A549 (cell line): ENCODE measurements at regions of chr11 and their contacts with region 1.

Region 1: DNA sequence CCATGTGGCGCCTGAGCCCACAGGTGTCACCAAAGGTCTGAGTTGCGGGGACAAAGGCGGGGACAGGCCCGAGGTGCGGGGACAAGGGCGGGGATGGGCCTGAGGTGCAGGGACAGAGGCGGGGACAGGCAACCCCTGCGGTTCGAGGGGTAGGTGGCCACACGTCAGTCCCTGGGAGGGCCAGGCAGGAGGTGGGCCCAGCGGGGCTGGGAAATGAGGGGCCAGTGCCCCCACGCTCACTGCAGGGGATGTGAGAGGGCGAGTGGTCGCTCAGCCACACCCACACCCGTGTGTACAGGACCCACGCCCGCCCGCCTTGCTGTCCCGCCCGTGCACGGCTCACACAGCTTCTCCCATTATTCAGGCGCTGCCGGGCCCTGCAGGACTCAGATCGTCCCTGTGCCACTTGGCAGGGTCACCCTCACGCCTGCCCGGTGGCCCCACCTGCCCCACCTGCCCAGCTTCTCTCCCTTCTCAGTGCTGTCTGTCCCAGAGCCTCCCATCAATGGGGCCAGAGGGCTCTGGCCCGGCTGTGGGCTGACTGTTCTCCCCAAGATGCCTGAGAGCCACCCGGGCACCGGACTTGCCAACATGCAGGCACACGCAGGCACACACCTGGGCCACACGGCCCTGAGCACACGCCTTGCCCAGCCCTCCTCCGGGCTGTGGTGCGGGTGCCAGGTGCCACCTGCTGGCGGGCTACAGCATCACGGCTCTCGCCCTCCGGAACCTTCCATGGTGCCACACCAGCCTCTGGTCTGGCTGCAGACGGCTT is 14.2 kb upstream of the MUC6 start:
- DNase-seq: peak; percentile 79 to 93
- ATAC-seq: peak; percentile 86 to 96
- H3K4me3 ChIP-seq: no peak overlapping the region
- H3K27ac ChIP-seq: peak overlapping the region; percentile 30 to 81; a peak in 5 of 6 replicates
- H3K4me1 ChIP-seq: peaks cover 42% of the 10 kb centered on the region
- CTCF ChIP-seq: peak; percentile 94
- EP300 ChIP-seq: no peak
- POLR2A ChIP-seq: no peak
- RAD21 ChIP-seq: peak; percentile 97 to 98

Region 2: DNA sequence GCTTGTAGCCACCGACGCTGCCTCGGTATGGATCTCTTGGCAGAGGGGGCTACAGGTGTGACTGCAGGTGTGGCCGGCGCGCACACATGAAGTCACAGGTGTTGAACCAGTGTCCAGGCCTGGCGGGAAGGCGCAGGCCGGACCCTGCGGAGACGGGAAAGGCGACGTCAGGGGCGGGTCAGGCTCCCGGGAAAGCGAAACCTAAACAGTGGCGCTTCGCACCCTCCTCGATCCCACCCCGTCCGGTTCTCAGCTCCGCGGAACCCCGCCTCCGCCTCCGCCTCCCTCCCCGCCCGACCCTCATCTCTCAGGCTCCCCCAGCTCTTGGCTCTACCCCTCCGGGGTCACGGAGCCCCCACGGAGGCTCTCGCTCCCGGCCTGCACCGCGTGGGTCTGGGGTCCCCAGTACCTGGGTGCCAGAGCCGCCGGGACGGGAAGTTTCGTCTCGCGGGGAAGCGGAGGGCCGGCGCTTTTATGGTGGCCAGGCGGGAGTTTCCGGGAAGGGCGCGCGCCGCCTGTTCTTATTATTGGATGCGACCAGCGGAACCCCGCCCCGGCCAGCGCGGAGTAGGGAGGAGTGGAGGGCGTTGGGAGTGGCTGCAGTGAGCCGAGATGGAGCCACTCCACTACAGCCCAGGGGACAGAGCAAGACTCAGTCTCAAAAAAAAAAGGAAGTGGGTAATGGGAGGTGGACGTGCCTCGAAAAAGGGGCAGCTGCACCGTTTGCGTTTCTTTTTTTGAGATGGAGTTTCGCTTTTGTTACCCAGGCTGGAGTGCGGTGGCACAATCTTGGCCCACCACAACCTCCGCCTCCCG is 435.1 kb before region 1 on chr11 and contains the start of gene IRF7:
- CTCF ChIA-PET with region 1: no interaction called
- POLR2A ChIA-PET with region 1: no interaction called
- DNase-seq: peak; percentile 90 to 92
- ATAC-seq: peak; percentile 72 to 90
- H3K4me3 ChIP-seq: peak within 1 kb of the TSS; percentile 58
- H3K27ac ChIP-seq: peak within 1 kb of the TSS; percentile 88 to 97
- H3K4me1 ChIP-seq: peaks cover 13% of the 10 kb centered on the region; the same call in 2 of the 3 replicates
- CTCF ChIP-seq: no peak
- EP300 ChIP-seq: no peak
- POLR2A ChIP-seq: peak; percentile 61
- RAD21 ChIP-seq: no peak
- polyA plus RNA-seq, gene IRF7: 2.0 TPM in 2 replicates

Region 3: GRCh38 chr11:859509-860131 is 191.1 kb before region 1 on chr11:
- CTCF ChIA-PET with region 1: interaction called, 32 read pairs
- POLR2A ChIA-PET with region 1: interaction called, 3 read pairs
- DNase-seq: peak; percentile 65 to 70
- ATAC-seq: peak; percentile 16 to 60
- H3K4me3 ChIP-seq: no peak overlapping the region
- H3K27ac ChIP-seq: peak overlapping the region in 1 of 2 experiments; percentile 71; a peak in 3 of 6 replicates
- H3K4me1 ChIP-seq: peaks cover 49% of the 10 kb centered on the region
- CTCF ChIP-seq: no peak
- EP300 ChIP-seq: no peak
- POLR2A ChIP-seq: no peak
- RAD21 ChIP-seq: no peak

Region 4: DNA sequence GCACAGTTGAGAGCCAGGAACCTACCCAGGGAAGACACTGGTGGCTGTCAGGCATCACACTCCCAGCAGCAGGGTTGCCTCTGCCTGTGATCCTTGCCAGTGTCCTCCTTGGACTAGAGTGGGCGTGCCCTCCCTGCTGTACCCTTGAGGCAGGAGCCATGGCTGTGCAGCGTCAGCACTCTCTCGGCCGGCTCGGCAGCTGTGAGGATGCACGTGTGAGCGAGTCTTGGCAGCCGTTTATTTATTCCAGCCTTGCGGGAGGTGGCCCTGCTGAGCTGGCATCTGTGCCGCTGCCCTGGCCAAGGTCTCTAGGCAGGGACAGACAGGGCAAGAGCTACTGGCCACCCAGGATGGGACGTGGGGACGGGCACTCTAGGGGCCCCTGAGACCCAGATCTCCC is 174.2 kb before region 1 on chr11:
- CTCF ChIA-PET with region 1: interaction called, 14 read pairs
- POLR2A ChIA-PET with region 1: no interaction called
- DNase-seq: no peak
- ATAC-seq: peak; percentile 2 to 9; a peak in 4 of 6 replicates
- H3K4me3 ChIP-seq: no peak overlapping the region
- H3K27ac ChIP-seq: no peak overlapping the region
- H3K4me1 ChIP-seq: peaks cover 5% of the 10 kb centered on the region; the same call in 1 of the 3 replicates
- CTCF ChIP-seq: no peak
- EP300 ChIP-seq: no peak
- POLR2A ChIP-seq: no peak
- RAD21 ChIP-seq: no peak

Region 5: GRCh38 chr11:898143-898511 is 152.6 kb before region 1 on chr11:
- CTCF ChIA-PET with region 1: interaction called, 20 read pairs
- POLR2A ChIA-PET with region 1: no interaction called
- DNase-seq: peak; percentile 36 to 57
- ATAC-seq: peak; percentile 65 to 80; a peak in 4 of 6 replicates
- H3K4me3 ChIP-seq: no peak overlapping the region
- H3K27ac ChIP-seq: no peak overlapping the region
- H3K4me1 ChIP-seq: no peaks in the 10 kb centered on the region
- CTCF ChIP-seq: no peak
- EP300 ChIP-seq: no peak
- POLR2A ChIP-seq: no peak
- RAD21 ChIP-seq: peak in 1 of 2 experiments; percentile 40; a peak in 2 of 5 replicates

Region 6: DNA sequence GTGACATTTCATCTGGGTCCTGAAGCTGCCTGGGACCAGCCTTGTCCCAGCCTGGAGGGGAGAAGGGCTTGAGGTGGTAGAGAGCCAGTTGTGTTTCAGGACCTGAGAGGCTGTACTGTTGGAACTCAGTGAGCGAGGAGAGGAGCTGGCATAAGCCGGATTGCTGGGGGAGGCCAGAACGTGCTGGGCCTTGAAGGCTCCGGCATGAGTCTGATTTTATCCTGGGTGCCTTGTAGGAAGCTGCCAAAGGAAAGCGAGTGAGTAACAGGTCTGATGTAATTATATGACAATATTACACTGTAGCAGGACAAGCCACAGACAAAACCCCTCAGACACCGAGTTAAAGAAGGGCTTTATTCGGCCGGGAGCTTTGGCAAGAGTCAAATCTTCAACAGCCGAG is 107.9 kb before region 1 on chr11:
- CTCF ChIA-PET with region 1: interaction called, 11 read pairs
- POLR2A ChIA-PET with region 1: no interaction called
- DNase-seq: no peak
- ATAC-seq: peak; percentile 31 to 65; a peak in 3 of 6 replicates
- H3K4me3 ChIP-seq: no peak overlapping the region
- H3K27ac ChIP-seq: peak overlapping the region; percentile 81 to 89
- H3K4me1 ChIP-seq: peaks cover 56% of the 10 kb centered on the region
- CTCF ChIP-seq: no peak
- EP300 ChIP-seq: no peak
- POLR2A ChIP-seq: no peak
- RAD21 ChIP-seq: no peak

Region 7: GRCh38 chr11:1025410-1026162 is 25.2 kb before region 1 on chr11:
- CTCF ChIA-PET with region 1: interaction called, 15 read pairs
- POLR2A ChIA-PET with region 1: no interaction called
- DNase-seq: no peak
- ATAC-seq: 0 out of 6 replicates have a peak, but pooled peaks of 1 of the 2 experiments have one; percentile 4
- H3K4me3 ChIP-seq: no peak overlapping the region
- H3K27ac ChIP-seq: no peak overlapping the region
- H3K4me1 ChIP-seq: no peaks in the 10 kb centered on the region
- CTCF ChIP-seq: no peak
- EP300 ChIP-seq: no peak
- POLR2A ChIP-seq: no peak
- RAD21 ChIP-seq: no peak

Region 8: DNA sequence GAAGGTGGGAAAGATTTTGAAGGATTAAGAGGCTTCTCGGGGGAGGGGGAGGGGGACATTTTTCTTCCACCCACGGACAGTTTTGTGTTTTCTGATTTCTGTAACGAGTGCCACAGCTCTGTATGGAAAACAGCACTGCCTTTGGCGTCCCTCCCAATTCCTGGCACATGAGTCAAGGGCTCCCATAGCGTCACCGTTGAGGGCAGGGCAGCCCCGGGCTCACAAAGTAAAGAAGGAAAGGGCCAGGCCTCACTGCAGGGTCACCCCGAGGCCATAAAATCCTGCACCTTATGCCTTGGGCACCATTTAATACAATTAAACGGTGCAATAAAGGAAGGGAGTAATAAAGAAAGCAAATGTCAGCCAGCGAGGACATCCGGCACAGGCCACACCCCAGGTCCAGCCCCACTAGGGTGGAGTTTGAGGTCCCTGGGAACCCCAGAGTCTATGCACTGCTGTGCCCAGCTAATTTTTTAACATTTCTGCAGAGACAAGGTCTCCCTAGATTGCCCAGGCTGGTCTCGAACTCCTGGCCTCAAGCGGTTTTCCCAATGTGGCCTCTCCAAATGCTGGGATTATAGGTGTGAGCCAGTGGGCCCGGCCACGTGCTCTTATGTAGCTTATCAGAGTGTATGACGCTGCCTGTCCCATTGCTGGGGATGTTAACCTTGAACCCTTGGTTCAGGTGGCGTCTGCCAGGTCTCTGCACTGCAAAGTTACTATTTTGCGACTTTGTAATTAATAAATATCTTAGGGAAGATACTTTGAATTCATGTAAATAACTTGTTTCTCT is 10.3 kb after region 1 on chr11:
- CTCF ChIA-PET with region 1: interaction called, 28 read pairs
- POLR2A ChIA-PET with region 1: no interaction called
- DNase-seq: peak; percentile 83 to 89
- ATAC-seq: peak; percentile 89 to 91
- H3K4me3 ChIP-seq: no peak overlapping the region; the same call in 2 of the 3 replicates
- H3K27ac ChIP-seq: peak overlapping the region; percentile 68 to 82
- H3K4me1 ChIP-seq: peaks cover 19% of the 10 kb centered on the region
- CTCF ChIP-seq: no peak
- EP300 ChIP-seq: 0 out of 5 replicates have a peak, but pooled peaks of 1 of the 2 experiments have one; percentile 45
- POLR2A ChIP-seq: no peak
- RAD21 ChIP-seq: no peak

Region 9: DNA sequence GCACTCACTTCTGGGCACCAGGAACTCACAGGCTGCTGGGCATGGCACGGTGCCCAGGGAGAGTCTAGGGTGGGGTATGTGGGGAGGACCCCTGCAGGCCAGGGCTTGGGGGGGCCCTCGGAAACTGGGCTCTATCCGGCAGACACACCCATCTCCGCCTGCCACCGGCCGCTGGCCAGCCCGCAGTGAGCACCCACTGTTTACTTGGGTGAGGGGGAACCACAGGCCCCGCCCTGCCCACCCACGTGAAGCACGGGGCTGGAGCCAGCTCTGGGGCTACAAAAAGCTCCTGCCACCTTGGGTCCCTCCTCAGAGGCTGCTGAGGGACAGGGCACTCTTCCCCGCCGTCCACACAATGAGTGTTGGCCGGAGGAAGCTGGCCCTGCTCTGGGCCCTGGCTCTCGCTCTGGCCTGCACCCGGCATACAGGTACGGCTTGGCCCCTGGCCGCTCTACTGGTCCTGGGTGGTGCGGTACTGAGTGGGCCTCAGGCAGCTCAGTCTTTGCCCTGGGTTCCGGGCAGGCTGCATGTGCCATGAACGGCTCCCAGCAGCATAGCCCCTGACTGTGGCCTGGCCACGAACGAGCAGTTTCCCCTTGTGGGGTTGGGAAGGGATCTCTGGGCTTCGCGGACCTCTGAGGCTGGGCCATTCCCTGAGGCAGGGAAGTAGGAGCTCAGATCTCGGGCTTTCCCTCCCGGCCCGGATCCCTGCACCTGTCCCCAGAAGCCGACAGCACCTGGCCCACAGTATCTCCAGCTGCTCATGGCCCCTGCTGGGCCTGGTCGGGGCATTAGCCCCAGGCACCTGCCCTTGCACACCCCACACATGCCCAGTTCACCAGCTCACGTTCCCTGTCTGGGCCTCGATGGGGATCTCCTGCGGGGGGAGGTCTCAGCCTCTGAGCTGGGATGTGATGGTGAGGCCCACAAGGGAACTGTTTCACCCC is 107.2 kb after region 1 on chr11 and contains the start of gene MUC5AC:
- CTCF ChIA-PET with region 1: no interaction called
- POLR2A ChIA-PET with region 1: no interaction called
- DNase-seq: peak in 1 of 2 experiments; percentile 51
- ATAC-seq: no peak
- H3K4me3 ChIP-seq: no peak within 1 kb of the TSS
- H3K27ac ChIP-seq: peak within 1 kb of the TSS; percentile 67 to 84
- H3K4me1 ChIP-seq: peaks cover 39% of the 10 kb centered on the region
- CTCF ChIP-seq: no peak
- EP300 ChIP-seq: no peak
- POLR2A ChIP-seq: peak; percentile 63
- RAD21 ChIP-seq: no peak
- polyA plus RNA-seq, gene MUC5AC: 7.4 and 24.5 TPM in 2 replicates